SK-N-SH (cell line): ENCODE measurements at regions of chr6 and their contacts with region 1.

Region 1: DNA sequence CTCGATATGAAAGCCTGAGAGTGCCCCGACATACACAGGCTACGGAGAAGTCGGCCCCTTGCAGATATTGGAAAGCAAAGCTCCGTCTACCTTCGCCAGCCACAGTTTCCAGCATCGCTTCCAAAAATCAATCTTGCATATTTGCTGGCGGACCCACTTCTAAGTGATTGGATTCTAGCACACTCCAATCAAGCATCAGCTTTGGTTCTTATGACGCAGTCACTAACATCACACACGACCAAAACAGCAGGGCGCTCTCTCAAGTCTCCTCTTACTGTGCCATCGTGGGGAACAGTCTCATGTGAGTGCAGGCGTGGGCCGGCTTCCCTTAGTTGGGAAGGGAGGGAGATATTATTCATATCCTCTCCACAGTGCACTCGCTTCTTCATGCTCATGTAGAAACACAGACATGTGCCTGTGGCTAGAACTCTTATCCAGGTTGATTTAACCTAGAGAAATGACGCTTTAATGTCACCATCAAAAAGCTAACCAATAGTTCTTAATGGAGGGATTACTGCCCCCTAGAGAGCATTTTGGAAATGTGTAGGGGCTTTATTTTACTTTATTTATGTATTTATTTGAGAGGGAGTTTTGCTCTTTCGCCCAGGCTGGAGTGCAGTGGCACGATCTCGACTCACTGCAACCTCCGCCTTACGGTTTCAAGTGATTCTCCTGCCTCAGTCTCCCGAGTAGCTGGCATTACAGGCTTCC is 229.8 kb downstream of the SOD2 start:
- DNase-seq: peak; percentile 31
- H3K4me3 ChIP-seq: no peak overlapping the region
- H3K27ac ChIP-seq: no peak overlapping the region
- H3K4me1 ChIP-seq: no peaks in the 10 kb centered on the region
- H3K27me3 ChIP-seq: peaks cover 16% of the 10 kb centered on the region; the same call in 1 of the 2 replicates
- CTCF ChIP-seq: peak; percentile 60
- EP300 ChIP-seq: no peak
- RAD21 ChIP-seq: peak; percentile 69

Region 2: DNA sequence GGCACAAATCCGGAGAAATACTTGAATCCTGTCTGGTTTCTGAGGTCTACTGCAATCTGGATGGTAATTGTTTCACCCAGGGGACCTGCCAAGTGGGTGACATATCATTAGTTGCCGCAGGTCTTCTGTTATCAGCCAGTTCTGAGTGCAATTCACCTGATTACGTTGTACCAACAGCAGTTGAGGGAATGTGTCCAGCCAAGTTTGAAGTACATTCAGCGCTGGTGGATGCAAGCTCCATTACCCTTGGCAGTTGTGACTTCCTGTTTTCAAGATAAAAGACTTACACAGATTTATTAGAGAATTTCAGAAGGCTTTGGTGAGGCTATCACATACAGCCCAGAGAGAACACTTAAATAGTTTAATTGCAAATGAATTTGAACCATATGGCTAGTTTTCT is 251.2 kb before region 1 on chr6:
- CTCF ChIA-PET with region 1: interaction called, 68 read pairs
- POLR2A ChIA-PET with region 1: no interaction called
- DNase-seq: no peak
- H3K4me3 ChIP-seq: no peak overlapping the region
- H3K27ac ChIP-seq: no peak overlapping the region
- H3K4me1 ChIP-seq: peaks cover 0 to 2% of the 10 kb centered on the region in 2 experiments; a peak in 1 of 4 replicates
- H3K27me3 ChIP-seq: peaks cover 19% of the 10 kb centered on the region; the same call in 1 of the 2 replicates
- CTCF ChIP-seq: no peak
- EP300 ChIP-seq: no peak
- RAD21 ChIP-seq: no peak